Mammary epithelial cell (primary cell): ENCODE measurements at regions of chr3 and their contacts with region 1.

Region 1: GRCh38 chr3:108221911-108222852 is at the start of gene IFT57:
- DNase-seq: peak; percentile 97
- H3K4me3 ChIP-seq: peak within 1 kb of the TSS; percentile 67 to 80 (median 71)
- H3K27ac ChIP-seq: peak within 1 kb of the TSS; percentile 94
- H3K4me1 ChIP-seq: peaks cover 21% of the 10 kb centered on the region
- H3K27me3 ChIP-seq: no peaks in the 10 kb centered on the region
- CTCF ChIP-seq: no peak
- total RNA-seq, gene IFT57: 32.8 to 37.6 TPM

Region 2: GRCh38 chr3:107938143-107938542 is 284.0 kb before region 1 on chr3:
- CTCF ChIA-PET with region 1: no interaction called
- dilution Hi-C with region 1: no loop called
- in situ Hi-C with region 1: no loop called
- intact Hi-C with region 1: loop called (anchors 2 kb)
- DNase-seq: peak; percentile 46
- H3K4me3 ChIP-seq: no peak overlapping the region
- H3K27ac ChIP-seq: no peak overlapping the region
- H3K4me1 ChIP-seq: peaks cover 5% of the 10 kb centered on the region
- H3K27me3 ChIP-seq: no peaks in the 10 kb centered on the region
- CTCF ChIP-seq: peak; percentile 41 to 72

Region 3: DNA sequence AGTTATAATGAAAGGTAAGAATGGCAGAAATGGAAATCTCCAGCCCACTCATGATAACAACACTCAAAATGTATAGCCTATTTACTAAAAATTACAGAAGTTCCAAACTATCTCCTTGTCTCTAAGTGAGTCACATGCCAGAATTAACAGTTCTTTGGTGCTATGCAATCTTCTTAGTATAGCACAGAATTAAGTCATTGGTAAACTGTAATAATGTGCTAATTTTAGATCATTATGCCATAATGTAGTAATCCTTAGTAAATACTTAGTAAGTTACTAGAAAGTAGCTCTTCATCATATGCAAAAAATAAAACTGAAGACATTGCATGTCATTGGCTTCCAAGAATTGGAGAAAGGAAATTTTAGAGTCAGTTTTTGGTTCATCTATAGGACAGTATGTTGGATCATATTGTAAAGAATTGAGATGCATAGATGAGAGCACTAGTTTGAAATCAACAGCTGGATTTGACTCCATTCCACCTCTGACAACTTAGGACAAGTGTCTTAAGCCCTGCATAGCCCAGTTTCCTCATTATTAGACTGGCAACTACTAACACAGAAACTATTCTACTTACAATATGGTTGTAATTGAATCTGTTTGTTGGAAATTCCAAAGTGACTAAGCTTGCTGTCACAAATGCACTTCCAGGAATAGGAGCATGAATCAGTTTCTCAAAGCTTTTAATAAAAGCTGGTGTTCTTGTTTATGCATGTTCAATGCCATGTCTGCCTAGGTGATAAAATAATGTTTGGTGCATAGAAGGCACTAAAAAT is 91.3 kb before region 1 on chr3:
- CTCF ChIA-PET with region 1: no interaction called
- dilution Hi-C with region 1: no loop called
- in situ Hi-C with region 1: no loop called
- intact Hi-C with region 1: loop called (anchors 1 kb)
- DNase-seq: peak; percentile 96
- H3K4me3 ChIP-seq: peak overlapping the region in 1 of 3 experiments; percentile 1
- H3K27ac ChIP-seq: peak overlapping the region; percentile 96
- H3K4me1 ChIP-seq: peaks cover 40% of the 10 kb centered on the region
- H3K27me3 ChIP-seq: no peaks in the 10 kb centered on the region
- CTCF ChIP-seq: no peak

Region 4: GRCh38 chr3:108153451-108153981 is 68.7 kb before region 1 on chr3:
- CTCF ChIA-PET with region 1: no interaction called
- dilution Hi-C with region 1: no loop called
- in situ Hi-C with region 1: no loop called
- intact Hi-C with region 1: loop called (anchors 1 kb)
- DNase-seq: peak; percentile 60
- H3K4me3 ChIP-seq: no peak overlapping the region
- H3K27ac ChIP-seq: no peak overlapping the region
- H3K4me1 ChIP-seq: no peaks in the 10 kb centered on the region
- H3K27me3 ChIP-seq: no peaks in the 10 kb centered on the region
- CTCF ChIP-seq: peak; percentile 39 to 58

Region 5: DNA sequence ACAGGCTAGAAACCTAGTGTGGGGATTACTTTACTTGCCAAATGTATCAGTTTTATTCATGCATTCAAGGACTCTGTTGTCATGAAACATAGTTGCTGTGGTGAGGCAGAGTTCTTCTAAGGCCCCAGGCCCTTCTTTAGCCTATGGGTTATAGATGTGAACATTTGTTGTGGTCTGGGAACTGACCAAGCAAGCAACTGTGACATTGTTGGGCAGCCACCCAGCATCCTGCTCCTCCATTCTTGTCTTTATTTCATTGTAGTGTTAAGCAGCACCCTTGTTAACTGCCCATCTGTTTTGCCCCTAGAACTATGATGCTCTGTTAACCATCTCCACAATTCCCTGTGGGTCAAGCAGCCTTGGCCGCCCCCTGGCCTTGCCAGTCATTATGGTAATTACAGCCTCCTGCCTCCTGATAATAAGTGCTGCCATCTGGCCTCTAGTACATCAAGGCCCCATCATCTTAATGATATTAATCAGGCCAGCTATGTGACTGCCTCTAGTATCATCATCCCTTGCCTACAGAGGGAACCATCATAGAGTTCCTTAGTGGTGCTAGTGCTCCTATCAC is 12.3 kb after region 1 on chr3:
- CTCF ChIA-PET with region 1: no interaction called
- dilution Hi-C with region 1: no loop called
- in situ Hi-C with region 1: no loop called
- intact Hi-C with region 1: no loop called
- DNase-seq: no peak
- H3K4me3 ChIP-seq: no peak overlapping the region
- H3K27ac ChIP-seq: no peak overlapping the region
- H3K4me1 ChIP-seq: no peaks in the 10 kb centered on the region
- H3K27me3 ChIP-seq: peaks cover 1% of the 10 kb centered on the region
- CTCF ChIP-seq: no peak

Region 6: GRCh38 chr3:108271626-108272025 is 49.4 kb after region 1 on chr3:
- CTCF ChIA-PET with region 1: no interaction called
- dilution Hi-C with region 1: no loop called
- in situ Hi-C with region 1: no loop called
- intact Hi-C with region 1: no loop called
- DNase-seq: no peak
- H3K4me3 ChIP-seq: no peak overlapping the region
- H3K27ac ChIP-seq: no peak overlapping the region
- H3K4me1 ChIP-seq: no peaks in the 10 kb centered on the region
- H3K27me3 ChIP-seq: no peaks in the 10 kb centered on the region
- CTCF ChIP-seq: no peak

Region 7: GRCh38 chr3:108472001-108472591 is 249.9 kb after region 1 on chr3:
- CTCF ChIA-PET with region 1: interaction called, 5 read pairs
- dilution Hi-C with region 1: no loop called
- in situ Hi-C with region 1: no loop called
- intact Hi-C with region 1: loop called (anchors 5 kb)
- DNase-seq: peak; percentile 93
- H3K4me3 ChIP-seq: peak overlapping the region in 2 of 3 experiments; percentile 15 to 16
- H3K27ac ChIP-seq: peak overlapping the region; percentile 90
- H3K4me1 ChIP-seq: peaks cover 25% of the 10 kb centered on the region
- H3K27me3 ChIP-seq: no peaks in the 10 kb centered on the region
- CTCF ChIP-seq: no peak